HEK293T (cell line): ENCODE measurements at regions of chr20 and their contacts with region 1.

Region 1: DNA sequence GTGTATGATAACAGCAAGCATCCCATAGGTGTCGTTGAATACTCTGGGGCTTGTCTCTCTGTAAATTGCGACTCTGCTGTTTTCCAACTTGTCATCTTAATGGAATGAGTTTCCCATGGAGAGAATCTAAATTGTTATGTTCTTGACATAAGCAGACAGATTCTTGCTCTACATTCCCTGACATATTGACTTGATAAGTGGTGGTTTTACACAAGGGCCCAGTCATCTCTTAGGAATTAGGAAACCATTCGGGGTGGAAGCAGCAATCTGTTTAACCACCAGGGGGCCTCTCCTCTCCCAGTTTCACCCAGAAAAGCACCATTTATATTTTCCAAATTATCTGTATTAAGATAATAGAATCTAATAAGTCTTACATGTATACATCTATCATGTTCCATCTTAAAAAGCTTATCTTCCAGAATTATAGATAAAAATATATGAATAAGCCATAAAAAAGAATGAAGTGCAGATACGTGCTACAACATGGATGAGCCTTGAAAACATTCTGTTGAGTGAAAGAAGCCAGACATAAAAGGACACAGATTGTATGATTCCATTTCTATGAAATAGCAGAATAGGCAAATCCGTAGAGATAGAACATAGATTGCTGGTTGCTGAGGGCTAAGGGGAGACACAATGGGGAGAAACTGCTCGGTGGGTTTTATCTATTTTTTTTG is 23.1 kb upstream of the MROH8 start:
- DNase-seq: peak; percentile 51

Region 2: DNA sequence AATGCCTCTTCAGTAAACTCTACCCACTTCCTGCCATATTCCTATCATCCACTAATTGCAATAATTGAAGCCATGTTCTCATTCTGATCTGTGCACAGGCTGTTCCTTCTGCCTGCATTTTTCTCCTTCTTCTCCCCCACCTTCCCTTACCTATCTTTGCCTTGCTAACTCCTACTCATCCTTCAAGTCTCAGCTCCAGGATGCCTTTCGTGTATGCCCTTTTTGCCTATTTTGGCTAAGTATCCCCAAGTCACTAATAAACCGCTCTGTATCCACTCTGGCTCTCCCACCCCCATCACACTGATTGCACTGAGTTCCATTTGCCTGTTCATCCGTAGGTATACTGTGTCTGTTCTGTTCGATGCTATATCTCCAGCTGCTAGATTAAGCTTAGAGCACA is 29.6 kb before region 1 on chr20:
- CTCF ChIA-PET with region 1: no interaction called
- POLR2A ChIA-PET with region 1: no interaction called
- DNase-seq: no peak

Region 3: GRCh38 chr20:37192137-37192854 is 10.1 kb before region 1 on chr20:
- CTCF ChIA-PET with region 1: interaction called, 10 read pairs
- POLR2A ChIA-PET with region 1: no interaction called
- DNase-seq: peak; percentile 83